ENCODE measurements at regions of chr15 and their contacts with region 1.

Region 1: DNA sequence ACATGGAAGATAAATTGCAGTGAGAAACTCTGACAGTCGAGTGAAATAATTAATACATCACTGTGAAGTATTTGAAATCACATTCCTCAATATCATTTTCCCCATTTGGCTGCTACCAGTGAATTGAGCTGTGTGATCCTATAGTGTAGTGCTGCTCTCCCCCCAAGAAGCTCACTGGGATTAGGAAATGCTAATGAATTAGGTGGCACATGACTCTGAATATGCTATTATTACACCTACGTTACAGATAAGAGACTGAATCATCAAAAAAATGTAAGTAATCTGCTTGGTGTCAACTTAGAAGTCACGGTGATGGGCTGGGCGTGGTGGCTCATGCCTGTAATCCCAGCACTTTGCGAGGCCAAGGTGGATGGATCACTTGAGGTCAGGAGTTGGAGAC is 34.7 kb upstream of the SYNM start:
- DNase-seq: no peak
- ATAC-seq: no peak
- H3K4me3 Mint-ChIP-seq: no peak overlapping the region
- H3K27ac Mint-ChIP-seq: no peak overlapping the region
- H3K4me1 Mint-ChIP-seq: no peaks in the 10 kb centered on the region
- H3K27me3 Mint-ChIP-seq: peaks cover 9% of the 10 kb centered on the region
- CTCF ChIP-seq: no peak

Region 2: DNA sequence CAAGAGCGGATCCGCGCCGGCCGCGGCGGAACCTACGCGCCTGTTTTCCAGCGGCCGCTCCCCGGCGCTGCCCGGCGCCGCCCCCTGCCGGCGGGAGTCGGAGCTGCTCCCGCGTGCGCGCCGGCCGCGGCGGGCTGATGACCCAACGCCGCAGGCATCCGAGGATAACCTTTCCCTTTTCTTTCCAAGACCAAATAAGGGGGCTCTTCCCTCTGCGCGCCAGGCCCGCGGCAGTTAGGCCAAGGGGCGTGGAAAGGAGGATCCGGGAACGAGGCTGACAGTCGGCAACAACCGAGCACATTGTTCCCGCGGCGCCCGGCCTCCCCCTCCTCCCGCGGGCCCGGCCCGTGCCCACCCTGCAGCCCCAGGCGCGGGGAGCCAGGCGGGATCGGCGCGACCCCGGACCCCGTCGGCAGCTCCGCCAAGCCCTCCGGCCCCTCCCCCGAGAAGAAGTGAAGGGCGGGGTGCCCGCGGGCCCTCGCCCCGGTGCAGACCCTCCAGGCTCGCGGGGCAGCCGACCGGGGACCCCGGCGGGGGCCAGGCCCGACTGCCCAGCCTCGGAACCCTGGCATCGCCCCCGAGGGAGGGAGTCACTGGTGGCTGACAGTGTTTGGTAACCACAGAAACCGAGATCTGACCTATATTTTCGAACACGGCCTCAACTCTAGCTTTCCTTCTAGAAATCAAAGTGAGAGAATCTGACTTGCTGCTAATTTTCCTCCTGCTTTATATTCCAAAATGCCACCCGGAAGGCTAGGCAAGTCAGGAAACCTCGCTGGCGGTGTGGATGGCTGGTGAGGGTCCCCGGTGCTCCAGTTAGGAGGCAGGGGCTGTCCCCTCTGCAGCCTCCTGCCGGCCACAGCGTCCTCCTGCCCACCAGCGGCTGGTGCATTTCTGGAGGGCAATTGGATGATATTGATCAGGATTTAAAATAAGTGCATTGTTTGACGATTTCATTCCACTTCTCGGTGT is 10.9 kb before region 1 on chr15:
- CTCF ChIA-PET with region 1: interaction called, 10 read pairs
- POLR2A ChIA-PET with region 1: no interaction called
- intact Hi-C with region 1: no loop called
- DNase-seq: peak; percentile 51
- ATAC-seq: peak; percentile 75
- H3K4me3 Mint-ChIP-seq: peak overlapping the region; percentile 61
- H3K27ac Mint-ChIP-seq: no peak overlapping the region
- H3K4me1 Mint-ChIP-seq: peaks cover 13% of the 10 kb centered on the region
- H3K27me3 Mint-ChIP-seq: peaks cover 55% of the 10 kb centered on the region
- CTCF ChIP-seq: no peak